ENCODE measurements at regions of chr7 and their contacts with region 1.

Region 1: DNA sequence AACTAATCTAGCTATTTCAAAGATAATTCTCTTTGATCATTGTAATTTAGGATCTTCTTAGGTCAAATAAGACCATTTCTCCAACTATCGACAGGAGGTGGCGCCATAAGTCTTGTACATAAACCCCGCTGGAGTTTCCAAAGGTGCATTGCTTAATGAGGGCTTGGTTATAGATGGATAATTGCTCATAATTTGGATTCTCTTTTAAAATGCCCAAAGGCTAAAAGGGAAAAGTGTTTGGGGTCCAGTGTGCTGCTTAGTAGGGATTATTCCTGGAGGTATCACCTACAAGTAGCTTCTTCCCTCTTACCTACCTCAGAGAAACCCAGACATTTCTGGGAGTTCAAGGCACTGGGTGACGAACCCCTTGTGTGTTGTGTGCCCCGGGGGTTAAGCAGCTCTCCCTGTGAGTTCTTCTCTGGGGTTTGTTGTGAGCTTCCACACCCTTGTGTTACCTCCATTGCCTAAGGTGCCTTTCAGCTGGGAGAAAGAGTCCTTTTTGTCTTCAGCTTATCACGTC is 75.2 kb downstream of the PAXIP1 start:
- DNase-seq: peak; percentile 89
- H3K4me3 ChIP-seq: peak overlapping the region; percentile 42 to 63 (median 56)
- H3K27ac ChIP-seq: peak overlapping the region; percentile 87 to 90 (median 89)
- H3K4me1 ChIP-seq: peaks cover 0 to 14% (median 8%) of the 10 kb centered on the region in 4 donors
- H3K27me3 ChIP-seq: no peaks in the 10 kb centered on the region
- CTCF ChIP-seq: peak; percentile 26 to 60 (median 42)
- EP300 ChIP-seq: no peak
- POLR2A ChIP-seq: no peak

Region 2: GRCh38 chr7:155003376-155004214 is 75.9 kb after region 1 on chr7:
- intact Hi-C with region 1: loop called (anchors 5 kb)
- DNase-seq: peak; percentile 90
- H3K4me3 ChIP-seq: peak overlapping the region; percentile 83 to 100 (median 98)
- H3K27ac ChIP-seq: peak overlapping the region; percentile 91 to 95 (median 92)
- H3K4me1 ChIP-seq: peaks cover 0 to 22% (median 19%) of the 10 kb centered on the region in 4 donors
- H3K27me3 ChIP-seq: no peaks in the 10 kb centered on the region
- CTCF ChIP-seq: no peak
- EP300 ChIP-seq: no peak
- POLR2A ChIP-seq: peak; percentile 50 to 87

Region 3: GRCh38 chr7:155190688-155191087 is 263.0 kb after region 1 on chr7:
- intact Hi-C with region 1: loop called (anchors 10 kb)
- DNase-seq: no peak
- H3K4me3 ChIP-seq: no peak overlapping the region
- H3K27ac ChIP-seq: no peak overlapping the region
- H3K4me1 ChIP-seq: no peaks in the 10 kb centered on the region
- H3K27me3 ChIP-seq: peaks cover 0 to 26% (median 0%) of the 10 kb centered on the region in 3 donors
- CTCF ChIP-seq: peak; percentile 65 to 92 (median 76)
- EP300 ChIP-seq: no peak
- POLR2A ChIP-seq: no peak

Region 4: DNA sequence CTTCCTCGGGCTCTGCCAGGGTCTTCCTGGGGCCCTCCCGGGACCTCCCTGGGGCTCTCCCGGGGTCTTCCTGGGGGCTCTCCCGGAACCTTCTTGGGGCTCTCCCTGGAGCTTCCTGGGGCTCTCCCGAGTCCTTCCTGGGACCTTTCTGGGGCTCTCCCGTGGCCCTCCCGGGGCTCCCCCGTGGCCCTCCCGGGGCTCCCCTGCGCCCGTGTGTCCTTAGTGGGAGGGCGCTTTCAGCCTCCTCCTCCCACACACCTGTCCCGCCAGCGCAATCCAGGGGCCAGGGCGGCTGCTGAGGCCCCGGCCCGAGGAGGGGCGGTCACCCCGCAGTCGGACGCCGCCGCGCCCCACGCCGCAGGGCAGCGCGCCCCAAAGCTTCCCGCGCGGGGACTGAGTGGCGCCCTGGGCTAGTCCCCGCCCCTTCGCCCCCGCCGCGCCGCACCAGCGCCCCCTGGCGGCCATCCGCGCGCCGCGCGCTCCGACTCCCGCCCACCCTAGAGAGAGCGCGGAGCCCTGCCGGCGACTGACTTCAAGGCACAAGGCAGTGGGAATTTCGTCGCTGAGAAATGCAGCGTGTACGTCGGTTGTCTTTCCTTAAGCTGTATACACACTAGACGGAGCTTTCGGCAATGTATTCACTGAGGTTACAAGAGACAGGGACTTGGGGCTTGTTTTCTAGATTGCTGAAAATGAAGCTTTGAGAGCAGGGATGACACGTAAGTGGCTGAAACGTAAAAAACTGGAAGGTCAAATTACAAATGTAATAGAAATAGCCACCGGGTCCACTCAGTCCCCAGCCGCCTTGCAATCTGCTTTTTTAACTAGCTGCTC is 417.1 kb after region 1 on chr7:
- intact Hi-C with region 1: loop called (anchors 1 kb)
- DNase-seq: peak; percentile 87
- H3K4me3 ChIP-seq: peak overlapping the region in 3 of 4 donors; percentile 38 to 43 (median 42)
- H3K27ac ChIP-seq: no peak overlapping the region
- H3K4me1 ChIP-seq: peaks cover 0 to 11% (median 10%) of the 10 kb centered on the region in 4 donors
- H3K27me3 ChIP-seq: peaks cover 4 to 27% (median 14%) of the 10 kb centered on the region in 3 donors
- CTCF ChIP-seq: peak; percentile 46 to 94 (median 75)
- EP300 ChIP-seq: no peak
- POLR2A ChIP-seq: no peak

Region 5: GRCh38 chr7:155576900-155577508 is 649.3 kb after region 1 on chr7:
- intact Hi-C with region 1: no loop called
- DNase-seq: peak; percentile 25
- H3K4me3 ChIP-seq: no peak overlapping the region
- H3K27ac ChIP-seq: no peak overlapping the region
- H3K4me1 ChIP-seq: no peaks in the 10 kb centered on the region
- H3K27me3 ChIP-seq: no peaks in the 10 kb centered on the region
- CTCF ChIP-seq: no peak
- EP300 ChIP-seq: no peak
- POLR2A ChIP-seq: no peak

Region 6: GRCh38 chr7:155763691-155764437 is 836.2 kb after region 1 on chr7:
- intact Hi-C with region 1: loop called (anchors 10 kb)
- DNase-seq: no peak
- H3K4me3 ChIP-seq: no peak overlapping the region
- H3K27ac ChIP-seq: peak overlapping the region in 3 of 4 donors; percentile 49 to 60 (median 56)
- H3K4me1 ChIP-seq: peaks cover 0 to 32% (median 7%) of the 10 kb centered on the region in 4 donors
- H3K27me3 ChIP-seq: no peaks in the 10 kb centered on the region
- CTCF ChIP-seq: no peak
- EP300 ChIP-seq: no peak
- POLR2A ChIP-seq: no peak